MCF 10A (cell line): ENCODE measurements at regions of chr16 and their contacts with region 1.

Region 1: DNA sequence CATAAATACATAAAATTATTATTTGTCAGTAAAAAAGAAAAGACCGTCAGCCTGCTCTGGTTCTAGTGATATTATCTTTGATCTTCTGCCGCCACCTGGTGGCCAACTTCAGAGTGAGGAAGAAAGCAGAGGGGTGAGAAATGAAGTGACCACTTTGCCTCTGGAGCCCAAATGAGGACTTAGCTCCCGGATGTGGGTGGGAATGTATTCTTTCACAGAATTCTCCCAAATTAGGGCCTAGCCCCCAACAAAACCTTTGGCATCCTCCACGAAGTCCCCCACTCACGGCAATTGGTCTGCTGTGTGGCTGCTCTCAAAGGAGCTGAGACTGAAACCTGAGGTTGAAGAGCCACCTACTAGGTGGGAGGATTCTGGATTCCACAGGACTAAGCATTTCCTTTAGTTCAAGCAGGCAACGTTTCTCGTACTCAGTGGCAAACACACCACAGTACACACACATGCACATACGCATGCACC is 4.9 kb upstream of the ZNF267 start:
- DNase-seq: peak; percentile 81
- H3K4me3 Mint-ChIP-seq: no peak overlapping the region
- H3K27ac Mint-ChIP-seq: no peak overlapping the region
- H3K4me1 Mint-ChIP-seq: peaks cover 8% of the 10 kb centered on the region
- H3K27me3 Mint-ChIP-seq: peaks cover 6% of the 10 kb centered on the region
- CTCF ChIP-seq: peak; percentile 65

Region 2: GRCh38 chr16:31853300-31853699 is 15.4 kb before region 1 on chr16:
- CTCF ChIA-PET with region 1: interaction called, 108 read pairs
- POLR2A ChIA-PET with region 1: interaction called, 5 read pairs
- intact Hi-C with region 1: no loop called
- DNase-seq: no peak
- H3K4me3 Mint-ChIP-seq: no peak overlapping the region
- H3K27ac Mint-ChIP-seq: no peak overlapping the region
- H3K4me1 Mint-ChIP-seq: no peaks in the 10 kb centered on the region
- H3K27me3 Mint-ChIP-seq: peaks cover 22% of the 10 kb centered on the region
- CTCF ChIP-seq: no peak

Region 3: DNA sequence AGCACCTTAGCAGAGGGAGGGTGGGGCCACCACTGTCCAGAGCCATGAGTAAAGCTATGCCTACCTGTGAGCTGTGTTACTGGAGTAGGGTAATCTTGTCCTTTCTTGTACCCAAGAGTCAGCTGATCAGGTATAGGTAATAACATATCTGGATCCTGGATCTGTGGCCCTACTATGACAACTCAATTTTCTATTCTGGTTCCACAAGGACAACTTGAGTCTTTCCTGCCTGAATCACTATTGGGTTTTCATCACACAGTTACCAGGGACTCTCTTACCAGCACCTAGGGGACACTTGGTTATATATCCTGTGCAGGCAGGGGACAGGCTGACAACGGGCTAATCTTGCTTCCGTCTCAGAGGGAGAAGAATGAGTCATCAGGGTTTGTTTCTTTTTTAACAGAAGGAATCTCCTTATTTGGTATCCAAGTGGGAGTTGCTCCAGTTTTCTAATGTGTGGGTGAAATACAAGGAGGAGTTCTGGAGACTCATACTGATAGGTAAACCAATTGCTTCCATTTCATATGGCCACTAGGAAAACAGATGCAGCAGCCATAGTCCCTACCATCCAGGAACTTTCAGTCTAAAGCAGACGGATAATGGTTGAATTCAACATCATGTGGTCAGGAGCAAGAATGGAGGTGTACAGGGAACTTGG is 11.7 kb after region 1 on chr16:
- CTCF ChIA-PET with region 1: interaction called, 20 read pairs
- POLR2A ChIA-PET with region 1: interaction called, 4 read pairs
- intact Hi-C with region 1: no loop called
- DNase-seq: peak; percentile 64
- H3K4me3 Mint-ChIP-seq: no peak overlapping the region
- H3K27ac Mint-ChIP-seq: peak overlapping the region; percentile 88
- H3K4me1 Mint-ChIP-seq: peaks cover 38% of the 10 kb centered on the region
- H3K27me3 Mint-ChIP-seq: no peaks in the 10 kb centered on the region
- CTCF ChIP-seq: no peak